ENCODE measurements at regions of chr1 and their contacts with region 1.

Region 1: DNA sequence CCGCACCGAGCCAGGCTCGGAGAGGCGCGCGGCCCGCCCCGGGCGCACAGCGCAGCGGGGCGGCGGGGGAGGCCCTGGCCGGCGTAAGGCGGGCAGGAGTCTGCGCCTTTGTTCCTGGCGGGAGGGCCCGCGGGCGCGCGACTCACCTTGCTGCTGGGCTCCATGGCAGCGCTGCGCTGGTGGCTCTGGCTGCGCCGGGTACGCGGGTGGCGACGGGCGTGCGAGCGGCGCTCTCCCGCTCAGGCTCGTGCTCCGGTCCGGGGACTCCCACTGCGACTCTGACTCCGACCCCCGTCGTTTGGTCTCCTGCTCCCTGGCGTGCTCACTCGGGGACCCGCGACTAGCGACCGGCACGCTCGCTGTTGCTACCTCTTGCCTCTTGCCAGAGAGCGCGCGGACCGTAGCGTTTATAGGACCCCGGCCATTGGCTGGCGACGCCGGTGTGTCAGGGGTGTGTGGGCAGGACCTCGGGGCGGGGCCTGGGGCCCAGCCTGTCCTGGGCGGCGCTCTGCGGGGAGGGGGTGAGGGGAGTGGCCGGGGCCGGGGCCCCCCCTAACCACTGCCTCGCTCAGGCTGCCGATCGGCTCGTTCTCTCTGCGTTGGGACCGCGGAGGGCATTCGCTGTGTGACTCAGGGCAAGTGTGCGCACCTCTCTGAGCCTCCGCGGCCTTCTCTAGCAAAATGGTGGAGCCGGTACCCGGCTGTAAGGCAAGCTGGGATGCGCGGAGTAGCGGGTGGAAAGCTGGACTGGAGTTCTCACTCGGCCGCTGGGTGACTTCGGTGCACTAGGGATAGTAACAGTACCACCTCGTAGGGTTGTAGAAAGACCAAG is at the start of gene SLC2A1:
- DNase-seq: peak; percentile 96
- H3K4me3 ChIP-seq: peak within 1 kb of the TSS; percentile 69 to 87 (median 83)
- H3K27ac ChIP-seq: peak within 1 kb of the TSS; percentile 82
- H3K4me1 ChIP-seq: peaks cover 45% of the 10 kb centered on the region
- H3K27me3 ChIP-seq: no peaks in the 10 kb centered on the region
- CTCF ChIP-seq: no peak
- total RNA-seq, gene SLC2A1: 471 to 738 TPM

Region 2: DNA sequence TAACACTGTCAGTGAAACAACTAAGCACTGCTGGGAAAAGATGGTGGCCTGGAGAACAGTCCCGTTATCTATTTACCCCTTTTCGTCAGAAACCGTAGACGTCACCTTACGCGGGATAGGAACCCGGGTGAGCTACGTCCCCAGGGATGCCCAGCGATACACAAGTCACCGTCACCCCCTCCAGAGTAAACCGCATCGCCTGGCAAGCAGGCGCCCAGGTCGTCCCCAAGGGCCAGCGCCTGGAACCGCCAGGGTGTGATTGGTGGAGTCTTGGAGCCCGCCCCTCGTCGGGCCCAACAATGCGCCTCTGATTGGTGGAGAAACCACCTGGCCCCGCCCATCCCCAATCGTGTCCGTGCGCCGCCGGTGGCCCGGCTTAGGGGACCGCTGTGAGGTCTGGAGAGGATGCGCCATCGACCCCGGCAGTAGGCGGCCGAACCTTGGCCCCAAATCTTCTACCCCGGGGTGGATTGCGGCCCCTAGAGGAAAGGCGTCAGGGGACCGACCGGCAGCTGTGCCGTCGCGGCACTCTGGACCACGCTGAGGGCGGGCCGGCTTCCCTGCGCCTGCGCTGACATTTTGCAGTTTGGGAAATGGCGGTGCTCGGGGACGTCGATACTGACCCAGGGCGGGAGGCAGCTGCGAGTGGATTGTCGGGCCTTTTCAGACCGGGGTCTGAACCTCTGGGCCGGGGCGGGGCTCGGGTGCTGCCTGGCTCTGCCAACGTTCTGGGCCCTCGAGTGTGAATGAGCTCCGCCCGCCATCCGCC is 34.4 kb before region 1 on chr1:
- CTCF ChIA-PET with region 1: no interaction called
- dilution Hi-C with region 1: no loop called
- in situ Hi-C with region 1: no loop called
- intact Hi-C with region 1: loop called (anchors 2 kb)
- DNase-seq: peak; percentile 77
- H3K4me3 ChIP-seq: peak overlapping the region; percentile 28 to 46 (median 35)
- H3K27ac ChIP-seq: no peak overlapping the region
- H3K4me1 ChIP-seq: peaks cover 36% of the 10 kb centered on the region
- H3K27me3 ChIP-seq: no peaks in the 10 kb centered on the region
- CTCF ChIP-seq: peak in 1 of 2 donors; percentile 30

Region 3: GRCh38 chr1:42943169-42943568 is 15.5 kb before region 1 on chr1:
- CTCF ChIA-PET with region 1: interaction called, 7 read pairs
- dilution Hi-C with region 1: no loop called
- in situ Hi-C with region 1: no loop called
- intact Hi-C with region 1: loop called (anchors 1 kb)
- DNase-seq: peak; percentile 98
- H3K4me3 ChIP-seq: no peak overlapping the region
- H3K27ac ChIP-seq: peak overlapping the region; percentile 87
- H3K4me1 ChIP-seq: peaks cover 98% of the 10 kb centered on the region
- H3K27me3 ChIP-seq: no peaks in the 10 kb centered on the region
- CTCF ChIP-seq: no peak

Region 4: DNA sequence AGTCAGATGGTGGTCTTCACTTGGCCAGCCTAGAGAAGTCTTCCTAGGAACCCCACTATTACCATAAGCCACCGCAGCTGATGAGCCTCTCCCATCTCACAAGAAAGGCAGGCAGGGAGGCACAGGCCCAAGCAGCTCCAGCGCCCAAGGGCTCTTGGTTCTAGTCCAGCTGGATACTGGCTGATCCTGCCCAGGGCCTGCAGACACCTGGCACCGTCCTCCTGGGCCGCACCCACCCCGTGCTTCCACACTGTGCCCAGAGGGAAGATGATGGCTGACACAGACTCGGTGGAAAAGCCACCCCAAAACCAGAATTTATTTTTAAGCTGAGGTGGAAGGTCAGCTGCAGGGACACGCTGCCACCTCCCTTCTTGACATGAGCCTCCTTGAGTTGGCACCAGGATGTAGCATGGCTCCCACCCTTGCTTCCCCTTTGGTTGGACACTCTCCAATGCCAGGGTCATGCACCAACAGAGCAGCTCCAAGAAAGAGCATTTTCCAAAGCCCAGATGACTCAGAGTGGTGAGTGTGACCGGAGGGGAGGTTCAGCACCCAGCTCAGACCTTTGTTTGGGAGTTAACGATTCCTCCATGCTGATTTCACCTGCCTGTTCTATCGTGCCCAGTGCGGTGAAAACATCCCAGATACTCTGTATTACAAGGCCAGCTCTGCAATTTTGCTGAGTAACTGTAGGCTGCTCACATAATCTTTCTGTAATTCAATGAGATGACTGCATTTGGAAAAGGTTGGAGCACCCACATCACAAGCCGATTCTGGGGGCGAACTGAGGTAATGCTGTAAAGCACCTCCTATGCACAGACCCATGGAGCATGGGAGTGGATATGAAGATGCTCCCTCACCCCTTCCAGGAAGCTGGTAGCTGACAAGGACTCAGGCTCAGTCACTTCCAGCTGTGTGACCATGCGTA is 63.1 kb after region 1 on chr1:
- CTCF ChIA-PET with region 1: no interaction called
- dilution Hi-C with region 1: no loop called
- in situ Hi-C with region 1: no loop called
- intact Hi-C with region 1: loop called (anchors 5 kb)
- DNase-seq: peak; percentile 99
- H3K4me3 ChIP-seq: peak overlapping the region in 1 of 3 experiments; percentile 31
- H3K27ac ChIP-seq: peak overlapping the region; percentile 83
- H3K4me1 ChIP-seq: peaks cover 41% of the 10 kb centered on the region
- H3K27me3 ChIP-seq: no peaks in the 10 kb centered on the region
- CTCF ChIP-seq: no peak

Region 5: GRCh38 chr1:43067977-43068751 is 109.5 kb after region 1 on chr1:
- CTCF ChIA-PET with region 1: no interaction called
- dilution Hi-C with region 1: no loop called
- in situ Hi-C with region 1: loop called in 1 of 2 experiments (anchors 5 kb)
- intact Hi-C with region 1: loop called (anchors 1 kb)
- DNase-seq: no peak
- H3K4me3 ChIP-seq: no peak overlapping the region
- H3K27ac ChIP-seq: no peak overlapping the region
- H3K4me1 ChIP-seq: peaks cover 11% of the 10 kb centered on the region
- H3K27me3 ChIP-seq: no peaks in the 10 kb centered on the region
- CTCF ChIP-seq: no peak